ENCODE measurements at regions of chr18 and their contacts with region 1.

Region 1: GRCh38 chr18:3652380-3653262 is 202.6 kb downstream of the TGIF1 start:
- DNase-seq: peak; percentile 96
- ATAC-seq: peak; percentile 83
- H3K4me3 ChIP-seq: 0 out of 6 replicates have a peak overlapping the region, but pooled peaks of 1 of the 3 experiments have one; percentile 7
- H3K27ac ChIP-seq: peak overlapping the region; percentile 67
- H3K4me1 ChIP-seq: peaks cover 88% of the 10 kb centered on the region
- H3K27me3 ChIP-seq: no peaks in the 10 kb centered on the region
- CTCF ChIP-seq: no peak
- EP300 ChIP-seq: peak in 1 of 2 experiments; percentile 86; a peak in 2 of 4 replicates
- POLR2A ChIP-seq: peak; percentile 49 to 78; a peak in 3 of 4 replicates
- RAD21 ChIP-seq: peak; percentile 19; the same call in 1 of the 2 replicates

Region 2: GRCh38 chr18:3541549-3542386 is 110.9 kb before region 1 on chr18:
- CTCF ChIA-PET with region 1: no interaction called
- POLR2A ChIA-PET with region 1: no interaction called
- in situ Hi-C with region 1: no loop called
- intact Hi-C with region 1: no loop called
- DNase-seq: no peak
- ATAC-seq: no peak
- H3K4me3 ChIP-seq: no peak overlapping the region
- H3K27ac ChIP-seq: no peak overlapping the region
- H3K4me1 ChIP-seq: no peaks in the 10 kb centered on the region
- H3K27me3 ChIP-seq: no peaks in the 10 kb centered on the region; a peak in 1 of 5 replicates
- CTCF ChIP-seq: no peak
- EP300 ChIP-seq: no peak
- POLR2A ChIP-seq: no peak
- RAD21 ChIP-seq: no peak

Region 3: DNA sequence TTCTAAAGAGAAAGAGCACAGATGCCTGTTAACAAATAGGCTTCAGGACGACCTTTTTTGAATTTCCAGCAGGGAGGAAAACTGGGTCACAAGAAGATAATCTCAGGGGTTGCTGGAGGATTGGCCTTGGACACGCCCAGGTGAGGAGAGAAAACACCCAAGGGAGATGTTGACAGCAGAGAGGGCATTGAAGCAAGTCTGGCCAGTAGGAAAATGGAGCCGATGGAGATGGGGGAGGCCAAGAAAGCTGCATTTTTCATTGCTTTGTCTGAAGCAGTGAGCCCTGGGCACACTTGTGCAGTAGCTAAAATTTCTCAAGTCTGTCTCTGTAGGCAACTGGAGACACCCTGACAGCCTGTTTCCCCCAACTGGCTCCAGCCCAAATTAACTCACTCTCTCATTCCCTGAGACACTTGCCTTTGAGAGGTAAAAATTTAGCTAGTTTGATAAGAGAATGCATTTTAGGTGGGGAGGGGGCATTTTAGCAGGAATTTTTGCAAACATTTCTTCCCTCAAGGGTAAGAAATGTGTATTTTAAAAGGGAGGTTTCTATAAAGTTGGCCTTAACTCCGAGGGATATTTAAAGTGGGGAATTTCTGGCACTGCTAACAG is 37.1 kb before region 1 on chr18:
- CTCF ChIA-PET with region 1: no interaction called
- POLR2A ChIA-PET with region 1: interaction called, 12 read pairs
- in situ Hi-C with region 1: no loop called
- intact Hi-C with region 1: loop called (anchors 5 kb)
- DNase-seq: no peak
- ATAC-seq: no peak
- H3K4me3 ChIP-seq: no peak overlapping the region
- H3K27ac ChIP-seq: peak overlapping the region; percentile 39
- H3K4me1 ChIP-seq: peaks cover 79% of the 10 kb centered on the region
- H3K27me3 ChIP-seq: no peaks in the 10 kb centered on the region
- CTCF ChIP-seq: no peak
- EP300 ChIP-seq: no peak
- POLR2A ChIP-seq: no peak
- RAD21 ChIP-seq: no peak

Region 4: GRCh38 chr18:3623769-3624545 is 28.7 kb before region 1 on chr18:
- CTCF ChIA-PET with region 1: no interaction called
- POLR2A ChIA-PET with region 1: interaction called, 24 read pairs
- in situ Hi-C with region 1: no loop called
- intact Hi-C with region 1: loop called (anchors 5 kb)
- DNase-seq: peak; percentile 98
- ATAC-seq: peak; percentile 96
- H3K4me3 ChIP-seq: peak overlapping the region; percentile 37 to 64 (median 52)
- H3K27ac ChIP-seq: peak overlapping the region; percentile 94
- H3K4me1 ChIP-seq: peaks cover 81% of the 10 kb centered on the region
- H3K27me3 ChIP-seq: peaks cover 0 to 1% of the 10 kb centered on the region in 2 experiments; a peak in 1 of 5 replicates
- CTCF ChIP-seq: peak; percentile 19; the same call in 1 of the 2 replicates
- EP300 ChIP-seq: peak; percentile 23 to 72
- POLR2A ChIP-seq: peak; percentile 93 to 94
- RAD21 ChIP-seq: peak; percentile 61

Region 5: GRCh38 chr18:3634250-3634939 is 18.2 kb before region 1 on chr18:
- CTCF ChIA-PET with region 1: no interaction called
- POLR2A ChIA-PET with region 1: interaction called, 4 read pairs
- in situ Hi-C with region 1: no loop called
- intact Hi-C with region 1: loop called (anchors 2 kb)
- DNase-seq: peak; percentile 58
- ATAC-seq: no peak
- H3K4me3 ChIP-seq: no peak overlapping the region
- H3K27ac ChIP-seq: no peak overlapping the region
- H3K4me1 ChIP-seq: peaks cover 49% of the 10 kb centered on the region
- H3K27me3 ChIP-seq: no peaks in the 10 kb centered on the region; a peak in 1 of 5 replicates
- CTCF ChIP-seq: no peak
- EP300 ChIP-seq: peak in 1 of 2 experiments; percentile 49; a peak in 2 of 4 replicates
- POLR2A ChIP-seq: no peak
- RAD21 ChIP-seq: no peak

Region 6: DNA sequence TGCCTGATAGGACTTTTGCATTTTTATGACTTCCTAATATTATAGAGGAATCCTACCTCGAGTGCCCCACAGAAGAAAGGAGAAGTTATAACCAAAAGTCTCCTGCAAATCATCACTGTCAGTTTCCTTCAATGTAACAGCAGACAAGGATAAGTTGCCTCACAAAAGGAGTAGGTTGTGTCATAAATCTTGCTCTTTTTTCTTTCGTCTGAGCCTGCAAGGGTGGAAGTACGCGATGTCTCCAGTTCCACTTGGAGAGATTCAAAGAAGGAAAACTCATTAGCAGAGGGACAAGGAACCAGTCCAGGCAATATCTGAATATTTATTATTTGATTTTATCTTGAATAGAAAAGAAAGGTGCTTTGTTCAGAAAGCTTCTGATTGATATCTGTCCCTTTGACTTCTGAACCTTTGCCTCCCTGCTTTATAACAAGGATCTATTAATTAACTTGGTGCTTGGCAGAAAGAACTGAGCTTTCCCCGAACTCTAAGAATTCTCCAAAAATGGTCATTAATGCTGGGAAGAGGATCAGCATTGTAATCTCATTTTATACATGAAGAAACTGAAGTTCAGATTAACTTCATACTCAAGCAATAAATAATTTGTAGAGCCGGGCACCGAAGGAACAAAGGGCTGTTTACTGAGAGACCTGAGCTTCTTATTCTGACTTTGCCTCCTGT is 69.8 kb after region 1 on chr18:
- CTCF ChIA-PET with region 1: no interaction called
- POLR2A ChIA-PET with region 1: no interaction called
- in situ Hi-C with region 1: no loop called
- intact Hi-C with region 1: no loop called
- DNase-seq: no peak
- ATAC-seq: no peak
- H3K4me3 ChIP-seq: peak overlapping the region in 2 of 3 experiments; percentile 11 to 25; a peak in 1 of 6 replicates
- H3K27ac ChIP-seq: peak overlapping the region; percentile 32
- H3K4me1 ChIP-seq: peaks cover 51% of the 10 kb centered on the region
- H3K27me3 ChIP-seq: peaks cover 0 to 9% of the 10 kb centered on the region in 2 experiments; a peak in 2 of 5 replicates
- CTCF ChIP-seq: no peak
- EP300 ChIP-seq: no peak
- POLR2A ChIP-seq: no peak
- RAD21 ChIP-seq: no peak

Region 7: GRCh38 chr18:4035521-4035920 is 382.9 kb after region 1 on chr18:
- CTCF ChIA-PET with region 1: no interaction called
- POLR2A ChIA-PET with region 1: no interaction called
- in situ Hi-C with region 1: no loop called
- intact Hi-C with region 1: no loop called
- DNase-seq: no peak
- ATAC-seq: no peak
- H3K4me3 ChIP-seq: no peak overlapping the region
- H3K27ac ChIP-seq: no peak overlapping the region
- H3K4me1 ChIP-seq: no peaks in the 10 kb centered on the region
- H3K27me3 ChIP-seq: no peaks in the 10 kb centered on the region
- CTCF ChIP-seq: no peak
- EP300 ChIP-seq: no peak
- POLR2A ChIP-seq: no peak
- RAD21 ChIP-seq: no peak

Measured in HepG2 (cell line).